Common myeloid progenitor, CD34-positive (primary cell): ENCODE measurements at regions of chr19 and their contacts with region 1.

Region 1: GRCh38 chr19:2578901-2579677 is 103.2 kb downstream of the GADD45B start:
- DNase-seq: peak; percentile 72 to 81 (median 80)
- H3K4me3 ChIP-seq: peak overlapping the region in 6 of 7 experiments; percentile 6 to 75 (median 62)
- H3K27ac ChIP-seq: no peak overlapping the region
- H3K4me1 ChIP-seq: peaks cover 0 to 16% (median 14%) of the 10 kb centered on the region in 4 experiments
- H3K27me3 ChIP-seq: no peaks in the 10 kb centered on the region

Region 2: GRCh38 chr19:2428321-2428690 is 150.8 kb before region 1 on chr19:
- CTCF ChIA-PET with region 1: no interaction called
- POLR2A ChIA-PET with region 1: no interaction called
- DNase-seq: peak in 2 of 3 donors; percentile 20 to 22
- H3K4me3 ChIP-seq: peak overlapping the region in 3 of 7 experiments; percentile 87 to 93 (median 93)
- H3K27ac ChIP-seq: peak overlapping the region in 1 of 2 experiments; percentile 98
- H3K4me1 ChIP-seq: peaks cover 2 to 47% (median 36%) of the 10 kb centered on the region in 4 experiments
- H3K27me3 ChIP-seq: no peaks in the 10 kb centered on the region

Region 3: GRCh38 chr19:2561895-2562294 is 17.2 kb before region 1 on chr19:
- CTCF ChIA-PET with region 1: interaction called, 15 read pairs
- POLR2A ChIA-PET with region 1: interaction called, 3 read pairs
- DNase-seq: peak in 2 of 3 donors; percentile 64 to 82
- H3K4me3 ChIP-seq: peak overlapping the region in 6 of 7 experiments; percentile 52 to 82 (median 61)
- H3K27ac ChIP-seq: no peak overlapping the region
- H3K4me1 ChIP-seq: peaks cover 0 to 25% (median 14%) of the 10 kb centered on the region in 4 experiments
- H3K27me3 ChIP-seq: no peaks in the 10 kb centered on the region

Region 4: GRCh38 chr19:2610637-2611482 is 31.8 kb after region 1 on chr19:
- CTCF ChIA-PET with region 1: interaction called, 35 read pairs
- POLR2A ChIA-PET with region 1: no interaction called
- DNase-seq: peak; percentile 69 to 76 (median 71)
- H3K4me3 ChIP-seq: peak overlapping the region; percentile 11 to 87 (median 64)
- H3K27ac ChIP-seq: no peak overlapping the region
- H3K4me1 ChIP-seq: peaks cover 0 to 40% (median 31%) of the 10 kb centered on the region in 4 experiments
- H3K27me3 ChIP-seq: no peaks in the 10 kb centered on the region

Region 5: DNA sequence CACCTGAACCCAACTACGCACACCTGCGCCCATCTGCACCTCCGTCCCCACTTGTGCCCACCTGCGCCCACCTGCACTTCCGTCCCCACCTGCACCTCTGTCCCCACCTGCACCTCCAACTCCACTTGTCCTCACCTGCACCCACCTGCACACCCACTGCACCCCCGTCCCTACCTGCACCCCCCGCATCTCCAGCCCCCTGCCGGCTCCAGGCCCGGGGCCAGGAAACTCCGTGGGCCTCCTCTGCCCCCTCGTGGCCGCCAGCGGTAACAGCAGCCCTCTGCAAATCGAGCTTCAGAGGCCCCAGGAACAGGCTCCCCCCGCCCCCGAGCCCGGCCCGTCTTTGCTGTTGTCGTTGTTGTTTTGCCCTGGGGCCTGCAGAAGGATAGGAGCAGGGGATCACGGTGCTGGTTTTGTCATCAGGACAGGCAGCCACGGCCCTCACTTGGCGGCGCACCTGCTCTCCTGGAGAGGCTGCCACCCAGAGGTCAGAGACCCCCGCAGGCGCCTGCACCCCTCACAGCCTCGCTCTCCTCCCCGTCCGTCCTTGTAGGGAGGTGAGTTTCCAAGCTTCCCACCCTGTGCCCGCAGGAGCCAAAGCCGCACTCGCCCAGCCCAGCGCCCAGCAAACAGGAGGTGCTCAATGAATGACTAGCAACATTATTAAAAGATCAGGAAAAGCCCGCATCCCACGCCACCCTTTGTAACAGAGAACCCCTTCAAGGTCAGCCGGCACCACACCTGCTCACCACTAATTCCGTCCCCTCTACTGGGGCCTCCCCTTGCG is 58.0 kb after region 1 on chr19:
- CTCF ChIA-PET with region 1: interaction called, 12 read pairs
- POLR2A ChIA-PET with region 1: no interaction called
- DNase-seq: peak; percentile 72 to 80 (median 78)
- H3K4me3 ChIP-seq: peak overlapping the region in 4 of 7 experiments; percentile 13 to 67 (median 38)
- H3K27ac ChIP-seq: no peak overlapping the region
- H3K4me1 ChIP-seq: peaks cover 1 to 28% (median 22%) of the 10 kb centered on the region in 4 experiments
- H3K27me3 ChIP-seq: no peaks in the 10 kb centered on the region

Region 6: DNA sequence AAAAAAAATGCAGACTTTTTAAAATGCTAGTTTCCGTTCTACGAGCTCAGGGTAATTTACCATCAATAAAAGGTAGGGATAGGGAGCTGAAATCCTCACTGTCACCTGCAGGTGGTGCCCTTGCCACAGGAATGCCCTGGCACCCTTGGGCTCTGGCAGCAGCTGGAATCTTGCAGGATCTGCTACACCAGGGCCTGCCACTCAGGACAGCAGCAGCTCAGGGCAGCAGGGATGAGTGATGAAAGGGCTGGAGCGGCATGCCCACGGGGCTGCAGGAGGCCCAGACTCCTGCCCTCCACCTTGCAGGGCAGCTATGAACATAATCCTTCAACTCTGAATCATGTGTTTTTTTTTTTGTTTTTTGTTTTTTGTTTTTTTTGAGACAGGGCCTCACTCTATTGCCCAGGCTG is 69.4 kb after region 1 on chr19:
- CTCF ChIA-PET with region 1: no interaction called
- POLR2A ChIA-PET with region 1: no interaction called
- DNase-seq: peak; percentile 87 to 95 (median 92)
- H3K4me3 ChIP-seq: no peak overlapping the region
- H3K27ac ChIP-seq: no peak overlapping the region
- H3K4me1 ChIP-seq: no peaks in the 10 kb centered on the region
- H3K27me3 ChIP-seq: no peaks in the 10 kb centered on the region

Region 7: GRCh38 chr19:2668175-2668763 is 89.2 kb after region 1 on chr19:
- CTCF ChIA-PET with region 1: no interaction called
- POLR2A ChIA-PET with region 1: no interaction called
- DNase-seq: no peak
- H3K4me3 ChIP-seq: no peak overlapping the region
- H3K27ac ChIP-seq: no peak overlapping the region
- H3K4me1 ChIP-seq: peaks cover 0 to 6% (median 0%) of the 10 kb centered on the region in 4 experiments
- H3K27me3 ChIP-seq: no peaks in the 10 kb centered on the region

Region 8: DNA sequence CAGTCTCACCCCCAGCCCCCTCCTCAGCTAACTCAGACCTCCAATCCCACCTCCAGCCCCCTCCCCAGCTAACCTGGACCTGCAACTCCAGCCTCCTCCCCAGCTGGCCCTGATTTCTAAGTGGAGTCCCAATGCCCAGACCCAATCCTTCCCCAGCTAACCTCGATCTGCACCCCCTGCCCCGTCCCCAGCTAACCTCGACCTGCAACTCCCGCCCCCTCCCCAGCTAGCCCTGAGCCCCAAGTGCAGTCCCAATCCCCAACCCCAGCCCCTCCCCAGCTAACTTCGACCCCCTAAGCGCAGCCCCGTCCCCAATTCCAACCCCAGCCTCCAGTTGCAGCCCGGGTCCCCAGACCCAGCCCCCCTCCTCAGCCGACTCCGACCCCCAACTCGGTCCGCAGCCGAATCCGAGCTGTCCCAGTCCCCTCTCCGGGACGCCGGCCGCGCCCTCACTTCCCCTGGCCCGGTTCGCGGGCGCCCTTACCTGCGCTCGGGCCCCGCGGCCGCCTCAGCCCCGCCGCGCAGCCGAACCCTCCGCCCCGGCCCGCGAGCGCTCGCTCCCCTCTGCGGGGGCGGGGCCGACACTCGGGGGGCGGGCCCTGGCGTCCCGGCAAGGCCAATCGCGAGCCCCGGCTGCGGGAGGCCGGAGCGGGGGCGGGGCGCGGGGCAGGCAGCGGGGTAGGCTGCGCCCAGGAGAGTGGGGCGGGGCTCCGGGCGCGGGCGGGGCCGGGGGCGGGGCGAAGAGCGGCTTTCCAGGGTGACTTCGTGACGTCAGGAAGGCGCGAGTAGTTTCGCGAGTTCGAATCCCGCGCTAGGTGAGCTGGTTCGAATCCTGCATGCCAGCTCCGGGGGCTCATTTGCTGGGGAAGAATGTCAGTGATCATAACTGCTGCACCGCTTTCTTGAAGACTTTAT is 123.3 kb after region 1 on chr19 and contains the start of gene GNG7:
- CTCF ChIA-PET with region 1: no interaction called
- POLR2A ChIA-PET with region 1: no interaction called
- DNase-seq: peak; percentile 89 to 94 (median 93)
- H3K4me3 ChIP-seq: peak within 1 kb of the TSS; percentile 45 to 84 (median 72)
- H3K27ac ChIP-seq: peak within 1 kb of the TSS in 1 of 2 experiments; percentile 61
- H3K4me1 ChIP-seq: peaks cover 0 to 12% (median 11%) of the 10 kb centered on the region in 4 experiments
- H3K27me3 ChIP-seq: no peaks in the 10 kb centered on the region